CD14-positive monocyte (primary cell): ENCODE measurements at regions of chr7 and their contacts with region 1.

Region 1: GRCh38 chr7:35537067-35538023 is 157.6 kb downstream of the HERPUD2 start:
- DNase-seq: peak; percentile 57 to 65 (median 61)
- H3K4me3 ChIP-seq: no peak overlapping the region
- H3K4me3 Mint-ChIP-seq: peak overlapping the region; percentile 68 to 81
- H3K27ac ChIP-seq: no peak overlapping the region
- H3K27ac Mint-ChIP-seq: no peak overlapping the region
- H3K4me1 ChIP-seq: no peaks in the 10 kb centered on the region
- H3K4me1 Mint-ChIP-seq: peaks cover 10% of the 10 kb centered on the region
- H3K27me3 ChIP-seq: peaks cover 0 to 3% of the 10 kb centered on the region in 2 donors
- H3K27me3 Mint-ChIP-seq: peaks cover 12 to 26% (median 24%) of the 10 kb centered on the region in 3 donors
- CTCF ChIP-seq: peak; percentile 94

Region 2: DNA sequence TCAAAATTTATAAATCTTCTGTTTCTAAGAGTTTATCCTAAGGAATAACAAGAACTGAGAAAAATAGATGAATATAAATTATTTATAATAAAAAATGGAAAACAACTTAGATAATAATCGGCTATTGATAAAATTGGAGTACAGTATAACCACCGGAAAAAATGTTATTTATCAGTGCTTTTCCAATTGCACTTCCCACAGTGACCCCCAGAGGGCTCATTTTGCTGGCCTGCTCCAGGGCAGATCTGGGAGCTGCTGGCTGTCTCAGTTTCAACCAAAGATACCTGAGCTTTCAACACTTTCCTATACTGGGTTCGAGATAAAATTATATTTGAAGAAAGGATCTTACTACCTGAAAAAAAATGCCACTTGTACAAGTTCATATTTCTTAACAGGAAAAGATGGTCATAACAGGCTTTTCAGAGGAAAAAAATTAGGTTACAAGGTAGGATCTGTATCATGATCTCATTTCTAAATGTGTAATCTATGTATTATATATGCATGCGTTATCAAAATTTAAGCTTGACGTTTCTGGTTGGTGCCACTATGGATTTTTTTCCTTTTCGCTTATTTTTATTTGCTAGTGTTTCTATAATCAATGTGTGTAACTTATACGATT is 713.6 kb before region 1 on chr7:
- intact Hi-C with region 1: loop called in 1 of 2 experiments (anchors 5 kb)
- DNase-seq: no peak
- H3K4me3 ChIP-seq: no peak overlapping the region
- H3K4me3 Mint-ChIP-seq: no peak overlapping the region
- H3K27ac ChIP-seq: no peak overlapping the region
- H3K27ac Mint-ChIP-seq: no peak overlapping the region
- H3K4me1 ChIP-seq: no peaks in the 10 kb centered on the region
- H3K4me1 Mint-ChIP-seq: no peaks in the 10 kb centered on the region
- H3K27me3 ChIP-seq: no peaks in the 10 kb centered on the region
- H3K27me3 Mint-ChIP-seq: peaks cover 0 to 5% (median 4%) of the 10 kb centered on the region in 3 donors
- CTCF ChIP-seq: peak; percentile 78

Region 3: GRCh38 chr7:35424869-35425495 is 112.4 kb before region 1 on chr7:
- intact Hi-C with region 1: loop called (anchors 2 to 10 kb)
- DNase-seq: peak; percentile 21 to 42 (median 24)
- H3K4me3 ChIP-seq: no peak overlapping the region
- H3K4me3 Mint-ChIP-seq: no peak overlapping the region
- H3K27ac ChIP-seq: no peak overlapping the region
- H3K27ac Mint-ChIP-seq: no peak overlapping the region
- H3K4me1 ChIP-seq: no peaks in the 10 kb centered on the region
- H3K4me1 Mint-ChIP-seq: no peaks in the 10 kb centered on the region
- H3K27me3 ChIP-seq: peaks cover 0 to 3% of the 10 kb centered on the region in 2 donors
- H3K27me3 Mint-ChIP-seq: peaks cover 3 to 8% (median 7%) of the 10 kb centered on the region in 3 donors
- CTCF ChIP-seq: peak; percentile 78